ENCODE measurements at regions of chr9 and their contacts with region 1.

Region 1: GRCh38 chr9:127233550-127233949 is 31.0 kb upstream of the GARNL3 start:
- DNase-seq: no peak
- H3K4me3 ChIP-seq: no peak overlapping the region
- CTCF ChIP-seq: no peak

Region 2: DNA sequence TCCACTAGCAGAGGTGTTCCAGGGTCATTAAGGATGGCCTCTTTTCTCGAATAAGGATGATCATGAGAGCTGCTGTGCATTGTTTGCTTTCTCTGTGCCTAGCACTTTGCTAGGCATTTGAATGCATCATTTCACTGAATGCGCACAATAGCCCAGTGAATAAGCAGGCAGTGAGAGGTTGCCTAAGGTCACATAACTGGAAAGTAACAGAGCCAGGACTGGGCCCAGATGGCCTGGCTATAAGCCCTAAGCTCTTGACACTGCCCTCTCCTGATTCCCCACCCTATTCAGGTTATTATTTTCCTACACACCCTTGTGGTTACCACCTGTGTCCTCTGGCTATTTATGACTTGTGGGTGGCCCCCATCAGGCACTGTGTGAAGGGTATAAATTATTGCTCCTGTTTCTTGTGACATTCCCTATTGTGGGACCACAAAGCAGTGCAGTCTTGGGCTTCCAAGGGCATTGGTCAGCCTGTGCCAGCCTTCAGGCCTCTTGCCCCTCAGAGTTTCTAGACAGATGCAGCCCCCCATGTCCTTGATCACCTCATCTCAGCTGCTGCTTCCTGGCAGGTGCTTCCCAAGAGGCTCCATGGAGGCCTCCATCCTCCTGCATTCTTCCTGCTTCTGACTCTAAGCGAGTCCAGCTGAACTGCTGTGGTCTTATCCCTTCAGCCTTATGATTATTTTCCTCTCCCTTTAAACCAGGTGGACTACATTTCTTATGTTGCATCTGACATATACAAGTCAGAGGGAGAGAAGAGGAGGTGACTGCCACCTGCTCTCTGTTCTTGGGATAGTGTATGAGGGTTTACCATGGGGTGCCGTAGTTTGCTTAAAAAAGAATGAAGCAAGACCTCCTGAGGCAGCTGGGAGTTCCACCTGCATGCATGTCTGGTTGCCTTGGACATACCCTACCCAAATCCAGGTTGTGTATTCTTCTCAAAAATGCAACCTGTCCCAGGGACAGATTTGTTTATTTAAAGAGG is 158.7 kb before region 1 on chr9:
- in situ Hi-C with region 1: no loop called
- DNase-seq: no peak
- H3K4me3 ChIP-seq: no peak overlapping the region
- CTCF ChIP-seq: no peak

Region 3: GRCh38 chr9:127308652-127309429 is 75.3 kb after region 1 on chr9:
- in situ Hi-C with region 1: loop called (anchors 5 kb)
- DNase-seq: no peak
- H3K4me3 ChIP-seq: no peak overlapping the region
- CTCF ChIP-seq: no peak